Right ventricle myocardium inferior (tissue), 1 donor: ENCODE measurements at regions of chr1 and their contacts with region 1.

Region 1: DNA sequence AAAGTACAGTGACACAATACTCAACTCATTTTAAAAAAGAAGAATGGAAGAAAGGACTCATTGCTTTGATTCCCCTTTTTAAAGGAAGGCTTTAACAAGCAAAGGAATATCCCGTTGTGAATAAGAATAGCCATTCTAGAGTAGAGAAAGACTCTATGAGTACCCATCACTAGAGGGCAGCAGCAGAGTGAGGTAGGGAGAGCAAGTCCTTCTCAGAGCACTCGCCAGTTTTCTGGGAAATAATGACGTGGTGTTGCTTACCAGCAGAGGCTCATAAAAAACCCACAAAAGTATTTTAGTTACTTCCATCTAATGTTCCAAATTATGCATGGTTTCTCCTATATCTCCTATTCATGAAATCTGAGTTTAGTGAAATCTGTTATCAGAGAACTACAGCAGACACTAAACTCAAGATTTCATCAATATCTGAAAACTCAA is 74.6 kb downstream of the USP24 start:
- DNase-seq: peak; percentile 69
- ATAC-seq: peak; percentile 93

Region 2: GRCh38 chr1:55277377-55278130 is 137.0 kb after region 1 on chr1:
- intact Hi-C with region 1: loop called (anchors 1 kb)
- DNase-seq: peak; percentile 85
- ATAC-seq: peak; percentile 82